ENCODE measurements at regions of chr12 and their contacts with region 1.

Region 1: GRCh38 chr12:15789220-15790171 is at the start of gene EPS8:
- DNase-seq: peak; percentile 88
- H3K4me3 Mint-ChIP-seq: peak within 1 kb of the TSS; percentile 82
- H3K27ac Mint-ChIP-seq: no peak within 1 kb of the TSS
- H3K4me1 Mint-ChIP-seq: peaks cover 15% of the 10 kb centered on the region
- H3K27me3 Mint-ChIP-seq: peaks cover 49% of the 10 kb centered on the region
- total RNA-seq, gene EPS8: 3.2 to 5.6 TPM

Region 2: DNA sequence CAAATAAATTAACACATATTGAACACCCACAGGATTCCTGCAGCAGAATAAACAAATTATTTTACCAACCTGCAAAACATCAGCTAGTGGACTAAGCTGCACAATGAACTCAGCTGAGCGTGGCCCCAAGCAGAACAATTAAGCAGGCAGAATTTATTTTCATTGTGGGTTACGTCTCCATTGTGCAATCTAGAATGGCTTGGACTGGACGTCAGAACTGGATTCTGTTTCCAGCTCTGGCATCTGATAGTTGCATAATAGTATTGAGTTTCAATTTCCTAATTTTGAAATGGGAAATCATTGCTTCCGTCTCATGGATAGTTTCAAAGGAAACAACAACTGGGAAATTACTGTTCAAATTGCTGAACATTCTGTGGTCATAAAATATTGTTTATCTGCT is 532.7 kb before region 1 on chr12:
- CTCF ChIA-PET with region 1: no interaction called
- intact Hi-C with region 1: no loop called
- DNase-seq: no peak
- H3K4me3 Mint-ChIP-seq: no peak overlapping the region
- H3K27ac Mint-ChIP-seq: no peak overlapping the region
- H3K4me1 Mint-ChIP-seq: no peaks in the 10 kb centered on the region
- H3K27me3 Mint-ChIP-seq: peaks cover 18% of the 10 kb centered on the region

Region 3: DNA sequence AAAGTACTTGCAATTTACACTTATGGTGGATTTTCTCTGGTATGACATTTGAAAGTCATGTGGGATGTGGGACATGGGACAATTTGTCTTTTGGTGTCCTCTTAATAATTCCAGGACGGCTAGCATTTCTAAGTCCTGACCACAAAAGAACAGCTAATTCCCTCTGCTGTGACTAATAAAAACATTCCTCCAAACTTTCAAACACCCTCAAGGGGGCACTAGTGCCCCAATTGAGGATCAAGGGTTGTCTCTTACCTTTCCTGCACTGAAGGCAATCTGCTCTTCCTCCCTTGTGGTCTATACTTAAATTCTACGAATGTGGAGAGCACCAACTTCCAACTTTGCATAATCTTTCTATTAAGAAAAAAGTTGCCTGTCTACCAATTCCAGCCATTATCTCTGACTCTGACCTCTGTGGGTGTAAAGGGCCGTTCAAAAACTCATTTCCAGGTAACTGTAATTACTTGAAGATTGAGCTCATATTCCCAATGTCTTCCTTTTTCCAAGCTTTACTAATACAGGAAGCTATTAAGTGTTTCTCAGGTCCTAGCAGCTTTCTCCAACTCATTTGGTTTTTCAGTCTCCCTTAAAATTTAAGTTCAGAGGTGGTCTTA is 257.0 kb before region 1 on chr12:
- CTCF ChIA-PET with region 1: interaction called, 3 read pairs
- intact Hi-C with region 1: loop called (anchors 2 kb)
- DNase-seq: peak; percentile 72
- H3K4me3 Mint-ChIP-seq: no peak overlapping the region
- H3K27ac Mint-ChIP-seq: no peak overlapping the region
- H3K4me1 Mint-ChIP-seq: peaks cover 18% of the 10 kb centered on the region
- H3K27me3 Mint-ChIP-seq: no peaks in the 10 kb centered on the region

Region 4: GRCh38 chr12:15700595-15700994 is 88.9 kb before region 1 on chr12:
- CTCF ChIA-PET with region 1: no interaction called
- intact Hi-C with region 1: loop called (anchors 1 kb)
- DNase-seq: peak; percentile 45
- H3K4me3 Mint-ChIP-seq: no peak overlapping the region
- H3K27ac Mint-ChIP-seq: peak overlapping the region; percentile 35
- H3K4me1 Mint-ChIP-seq: peaks cover 27% of the 10 kb centered on the region
- H3K27me3 Mint-ChIP-seq: peaks cover 3% of the 10 kb centered on the region

Region 5: GRCh38 chr12:15772405-15773018 is 17.0 kb before region 1 on chr12:
- CTCF ChIA-PET with region 1: no interaction called
- intact Hi-C with region 1: loop called (anchors 1 kb)
- DNase-seq: no peak
- H3K4me3 Mint-ChIP-seq: no peak overlapping the region
- H3K27ac Mint-ChIP-seq: no peak overlapping the region
- H3K4me1 Mint-ChIP-seq: no peaks in the 10 kb centered on the region
- H3K27me3 Mint-ChIP-seq: peaks cover 7% of the 10 kb centered on the region

Region 6: DNA sequence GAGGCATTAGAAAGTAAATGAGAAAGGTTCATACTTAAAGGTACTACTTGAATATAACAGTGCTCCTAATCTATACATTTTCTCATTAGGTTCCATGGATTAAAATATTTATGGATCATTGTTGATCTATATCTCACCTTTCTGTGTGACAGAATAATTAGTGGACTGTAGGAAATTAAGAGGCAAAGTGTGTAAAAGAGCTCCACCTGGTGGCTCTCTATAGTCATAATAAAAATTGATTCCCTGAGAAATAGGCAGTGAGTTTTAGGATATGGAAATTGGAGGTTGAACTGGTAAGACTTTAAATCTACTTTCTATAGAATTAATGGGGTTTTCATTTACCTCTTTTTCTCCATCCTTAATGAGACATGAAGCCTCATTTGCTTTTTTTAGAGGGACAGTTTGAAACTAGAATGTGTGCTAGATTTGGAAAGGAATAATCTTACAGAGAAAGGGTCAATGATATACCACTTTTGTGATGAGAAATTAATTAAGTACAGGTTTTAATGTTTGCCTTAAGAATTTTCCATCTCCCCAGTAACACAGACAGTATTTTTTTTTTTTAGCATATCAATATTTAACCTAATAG is 109.9 kb after region 1 on chr12:
- CTCF ChIA-PET with region 1: no interaction called
- intact Hi-C with region 1: loop called (anchors 5 kb)
- DNase-seq: no peak
- H3K4me3 Mint-ChIP-seq: no peak overlapping the region
- H3K27ac Mint-ChIP-seq: no peak overlapping the region
- H3K4me1 Mint-ChIP-seq: peaks cover 4% of the 10 kb centered on the region
- H3K27me3 Mint-ChIP-seq: no peaks in the 10 kb centered on the region

Measured in activated naive CD4-positive, alpha-beta T cell treated with anti-CD3 and anti-CD28 coated beads for 36 hours (primary cell).